Heart right ventricle (tissue), 16 donors: ENCODE measurements at regions of chr9 and their contacts with region 1.

Region 1: DNA sequence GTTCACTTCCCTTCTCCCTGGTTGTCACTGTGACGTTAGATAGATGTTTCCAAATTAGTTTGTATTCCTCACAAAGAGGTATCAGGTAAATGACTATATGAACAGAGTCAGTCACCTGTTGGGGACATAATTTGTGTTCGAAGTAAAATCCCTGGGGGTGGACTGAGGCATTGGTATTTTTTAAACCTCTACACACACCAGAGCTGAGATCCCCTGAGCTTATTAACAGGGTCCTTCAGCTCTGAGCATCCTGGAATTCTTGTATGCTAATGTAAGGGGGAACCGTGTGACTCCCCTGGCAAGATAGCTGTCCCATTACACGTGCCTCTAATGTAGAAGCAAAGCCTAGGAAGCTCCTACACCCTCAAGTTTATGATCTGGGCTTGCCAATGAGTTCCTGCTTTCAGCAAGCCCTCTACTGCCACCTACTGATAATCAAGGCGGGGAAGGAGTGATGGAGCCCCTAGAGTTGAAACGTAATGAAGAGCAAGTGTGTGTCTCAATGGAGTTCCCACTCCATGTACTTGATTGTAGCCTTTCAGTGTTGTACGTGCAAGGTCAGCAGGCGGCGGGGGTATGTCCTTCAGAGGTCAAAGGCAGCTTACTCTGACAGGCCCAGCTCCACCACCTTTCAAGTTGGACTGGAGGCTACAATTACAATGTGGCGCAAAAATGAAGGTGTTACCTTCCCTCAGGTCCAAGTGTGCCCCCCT is 14.4 kb downstream of the PRKACG start:
- DNase-seq: peak in 1 of 2 donors; percentile 84
- ATAC-seq: peak; percentile 86 to 93 (median 91)
- H3K4me3 ChIP-seq: no peak overlapping the region
- H3K27ac ChIP-seq: peak overlapping the region in 9 of 10 donors; percentile 17 to 72 (median 64)
- H3K4me1 ChIP-seq: peaks cover 0 to 45% (median 27%) of the 10 kb centered on the region in 9 donors
- H3K27me3 ChIP-seq: no peaks in the 10 kb centered on the region
- CTCF ChIP-seq: peak; percentile 54 to 87 (median 83)

Region 2: DNA sequence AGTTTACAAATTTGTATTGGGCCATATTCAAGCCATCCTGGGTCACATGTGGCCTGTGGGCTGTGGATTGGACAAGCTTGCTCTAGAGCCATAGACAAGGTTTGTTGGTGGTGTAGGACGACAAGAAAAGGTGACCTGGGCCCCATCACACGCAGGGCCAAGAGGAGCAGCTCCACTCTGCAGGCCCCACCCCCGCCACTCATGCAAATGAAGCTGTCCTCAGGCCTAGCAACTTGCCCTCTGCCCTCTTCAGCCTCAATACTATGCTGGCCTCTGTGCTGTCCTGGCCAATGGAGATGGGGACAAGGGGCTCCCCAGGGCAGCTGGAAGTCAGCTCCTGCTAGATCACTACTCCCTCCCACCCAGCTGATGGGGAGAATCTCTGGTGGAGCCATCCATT is 403.7 kb before region 1 on chr9:
- intact Hi-C with region 1: loop called in 1 of 10 experiments (anchors 5 kb)
- DNase-seq: no peak
- ATAC-seq: no peak
- H3K4me3 ChIP-seq: no peak overlapping the region
- H3K27ac ChIP-seq: no peak overlapping the region
- H3K4me1 ChIP-seq: no peaks in the 10 kb centered on the region
- H3K27me3 ChIP-seq: no peaks in the 10 kb centered on the region
- CTCF ChIP-seq: no peak

Region 3: DNA sequence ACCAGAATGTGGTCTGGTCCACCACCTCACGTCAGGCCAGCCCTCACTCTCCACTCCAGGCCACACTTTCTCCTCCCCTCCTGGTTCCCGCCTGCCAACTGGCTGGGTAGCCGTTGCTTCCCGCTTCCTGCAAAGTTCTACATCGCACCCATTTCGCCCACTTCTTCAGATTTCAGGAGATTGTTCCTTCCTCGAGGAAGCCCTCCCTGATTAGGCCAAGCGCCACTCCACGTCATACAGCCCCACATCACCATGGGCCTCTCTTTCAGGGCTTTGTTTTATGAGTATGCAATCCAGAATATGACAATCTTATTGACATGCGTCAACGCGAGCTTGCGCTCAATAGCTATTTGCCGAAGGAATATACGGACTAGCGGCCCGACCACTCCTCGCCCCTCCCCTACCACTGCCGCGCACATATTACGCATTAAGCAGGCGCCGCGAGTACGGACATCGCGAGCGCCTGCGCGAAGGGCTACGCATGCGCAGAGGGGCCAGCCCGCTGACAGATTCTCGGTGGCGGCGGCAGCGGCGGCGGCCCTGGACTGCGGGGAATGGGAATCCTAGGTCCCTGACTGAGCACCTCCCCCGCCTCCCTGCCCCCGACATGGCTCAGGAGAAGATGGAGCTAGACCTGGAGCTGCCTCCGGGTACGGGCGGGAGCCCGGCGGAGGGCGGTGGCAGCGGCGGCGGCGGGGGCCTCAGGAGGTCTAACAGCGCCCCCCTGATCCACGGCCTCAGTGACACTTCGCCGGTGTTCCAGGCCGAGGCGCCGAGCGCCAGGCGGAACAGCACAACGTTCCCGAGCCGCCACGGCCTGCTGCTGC is 219.8 kb before region 1 on chr9:
- intact Hi-C with region 1: loop called in 2 of 10 experiments (anchors 10 kb)
- DNase-seq: peak; percentile 96
- ATAC-seq: peak; percentile 92 to 98 (median 96)
- H3K4me3 ChIP-seq: peak overlapping the region; percentile 47 to 79 (median 73)
- H3K27ac ChIP-seq: peak overlapping the region; percentile 84 to 97 (median 92)
- H3K4me1 ChIP-seq: peaks cover 9 to 80% (median 58%) of the 10 kb centered on the region in 9 donors
- H3K27me3 ChIP-seq: no peaks in the 10 kb centered on the region
- CTCF ChIP-seq: peak in 7 of 9 donors; percentile 16 to 67 (median 56)

Region 4: GRCh38 chr9:68844631-68845612 is 154.6 kb before region 1 on chr9:
- intact Hi-C with region 1: loop called in 2 of 10 experiments (anchors 10 kb)
- DNase-seq: peak; percentile 32 to 53
- ATAC-seq: peak in 7 of 8 donors; percentile 45 to 67 (median 55)
- H3K4me3 ChIP-seq: peak overlapping the region in 1 of 10 donors; percentile 28
- H3K27ac ChIP-seq: peak overlapping the region in 2 of 10 donors; percentile 15 to 68
- H3K4me1 ChIP-seq: peaks cover 0 to 46% (median 16%) of the 10 kb centered on the region in 9 donors
- H3K27me3 ChIP-seq: no peaks in the 10 kb centered on the region
- CTCF ChIP-seq: peak in 8 of 9 donors; percentile 40 to 67 (median 58)

Region 5: GRCh38 chr9:68895741-68896478 is 103.6 kb before region 1 on chr9:
- intact Hi-C with region 1: loop called in 1 of 10 experiments (anchors 10 kb)
- DNase-seq: no peak
- ATAC-seq: peak in 7 of 8 donors; percentile 60 to 80 (median 63)
- H3K4me3 ChIP-seq: peak overlapping the region in 4 of 10 donors; percentile 4 to 26 (median 10)
- H3K27ac ChIP-seq: peak overlapping the region in 9 of 10 donors; percentile 13 to 67 (median 49)
- H3K4me1 ChIP-seq: peaks cover 0 to 61% (median 32%) of the 10 kb centered on the region in 9 donors
- H3K27me3 ChIP-seq: no peaks in the 10 kb centered on the region
- CTCF ChIP-seq: no peak

Region 6: DNA sequence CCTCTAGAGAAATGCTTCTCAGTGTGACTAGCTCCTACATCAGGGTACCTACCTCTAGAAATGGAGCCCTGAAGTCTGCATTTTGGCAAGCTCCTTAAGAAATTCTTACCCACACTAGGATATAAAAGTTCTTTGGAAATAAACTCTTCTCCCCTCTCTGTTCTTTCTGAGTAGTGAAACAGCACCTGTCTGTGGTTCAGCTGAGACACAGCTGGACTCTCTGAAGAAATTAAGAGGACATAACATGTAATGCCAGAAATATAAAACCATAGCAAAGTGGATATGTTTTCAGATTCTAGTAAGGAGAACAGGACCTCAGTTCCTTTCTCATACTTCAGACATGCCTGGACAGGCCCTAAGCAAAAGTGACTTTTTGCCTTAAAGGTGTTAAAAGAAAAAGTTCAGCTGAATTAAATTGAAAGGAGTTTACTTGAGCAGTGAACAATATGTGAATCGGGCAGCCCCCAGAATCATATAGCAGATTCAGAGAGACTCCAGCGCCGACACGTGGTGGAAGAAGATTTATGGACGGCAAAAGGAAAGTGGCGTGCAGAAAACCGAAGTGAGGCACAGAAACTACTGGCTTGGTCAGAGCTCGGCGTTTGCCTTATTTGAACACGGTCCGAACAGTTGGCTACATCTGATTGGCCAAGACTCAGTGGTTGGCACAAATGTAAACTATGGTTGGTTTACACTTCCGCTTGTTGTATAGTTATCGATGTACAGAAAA is 50.1 kb before region 1 on chr9:
- intact Hi-C with region 1: loop called in 1 of 10 experiments (anchors 5 kb)
- DNase-seq: peak in 1 of 2 donors; percentile 23
- ATAC-seq: peak in 4 of 8 donors; percentile 30 to 41 (median 38)
- H3K4me3 ChIP-seq: no peak overlapping the region
- H3K27ac ChIP-seq: peak overlapping the region in 2 of 10 donors; percentile 12 to 36
- H3K4me1 ChIP-seq: peaks cover 0 to 15% (median 0%) of the 10 kb centered on the region in 9 donors
- H3K27me3 ChIP-seq: no peaks in the 10 kb centered on the region
- CTCF ChIP-seq: peak in 6 of 9 donors; percentile 11 to 39 (median 19)